HepG2 (cell line): ENCODE measurements at regions of chr13 and their contacts with region 1.

Region 1: DNA sequence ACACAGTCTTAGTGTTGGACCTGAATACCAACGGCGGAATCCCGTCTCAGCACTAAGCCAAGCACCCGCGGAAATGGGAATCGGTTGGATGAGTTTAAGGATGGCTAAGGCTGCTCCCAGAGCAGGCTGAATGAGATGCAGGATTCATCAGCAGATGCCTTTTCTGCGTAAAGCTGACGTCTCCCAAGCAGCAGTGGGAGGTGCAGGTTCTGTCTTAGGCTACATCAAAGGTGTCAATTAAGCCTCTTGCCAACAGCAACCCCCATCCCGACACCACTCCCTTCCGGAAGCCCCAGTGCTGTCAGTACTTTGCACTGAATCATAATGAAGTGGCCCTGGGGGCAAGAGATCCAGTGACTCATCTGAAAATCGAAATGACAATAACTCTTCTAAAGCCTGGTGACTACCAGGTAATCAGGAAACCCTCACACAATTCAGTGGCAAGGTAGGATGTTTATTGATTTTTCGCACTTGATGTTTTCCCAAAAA is 275.6 kb downstream of the DCLK1 start:
- DNase-seq: no peak
- ATAC-seq: no peak
- H3K4me3 ChIP-seq: no peak overlapping the region
- H3K27ac ChIP-seq: no peak overlapping the region
- H3K4me1 ChIP-seq: no peaks in the 10 kb centered on the region
- H3K27me3 ChIP-seq: peaks cover 0 to 13% of the 10 kb centered on the region in 2 experiments; a peak in 1 of 5 replicates
- CTCF ChIP-seq: no peak
- EP300 ChIP-seq: no peak
- POLR2A ChIP-seq: no peak
- RAD21 ChIP-seq: no peak

Region 2: DNA sequence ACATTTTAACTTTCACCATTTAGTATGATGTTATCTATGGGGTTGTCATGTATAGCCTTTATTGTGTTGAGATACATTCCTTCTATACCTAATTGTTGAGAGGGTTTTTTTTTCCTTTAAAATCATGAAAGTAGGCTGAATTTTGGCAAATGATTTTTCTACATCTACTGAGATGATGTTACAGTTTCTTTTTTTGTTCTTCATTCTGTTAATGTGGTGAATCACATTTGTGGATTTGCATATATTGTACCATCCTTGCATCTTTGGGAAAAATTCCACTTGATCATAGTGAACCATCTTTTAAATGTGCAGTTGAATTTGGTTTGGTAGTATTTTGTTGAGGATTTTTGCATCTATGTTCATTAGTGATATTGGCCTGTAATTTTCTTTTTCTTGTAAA is 605.9 kb after region 1 on chr13:
- CTCF ChIA-PET with region 1: no interaction called
- POLR2A ChIA-PET with region 1: no interaction called
- in situ Hi-C with region 1: no loop called
- intact Hi-C with region 1: loop called (anchors 10 kb)
- DNase-seq: no peak
- ATAC-seq: no peak
- H3K4me3 ChIP-seq: no peak overlapping the region
- H3K27ac ChIP-seq: no peak overlapping the region
- H3K4me1 ChIP-seq: no peaks in the 10 kb centered on the region
- H3K27me3 ChIP-seq: no peaks in the 10 kb centered on the region
- CTCF ChIP-seq: no peak
- EP300 ChIP-seq: no peak
- POLR2A ChIP-seq: no peak
- RAD21 ChIP-seq: no peak